GM23248 (cell line): ENCODE measurements at regions of chr6 and their contacts with region 1.

Region 1: DNA sequence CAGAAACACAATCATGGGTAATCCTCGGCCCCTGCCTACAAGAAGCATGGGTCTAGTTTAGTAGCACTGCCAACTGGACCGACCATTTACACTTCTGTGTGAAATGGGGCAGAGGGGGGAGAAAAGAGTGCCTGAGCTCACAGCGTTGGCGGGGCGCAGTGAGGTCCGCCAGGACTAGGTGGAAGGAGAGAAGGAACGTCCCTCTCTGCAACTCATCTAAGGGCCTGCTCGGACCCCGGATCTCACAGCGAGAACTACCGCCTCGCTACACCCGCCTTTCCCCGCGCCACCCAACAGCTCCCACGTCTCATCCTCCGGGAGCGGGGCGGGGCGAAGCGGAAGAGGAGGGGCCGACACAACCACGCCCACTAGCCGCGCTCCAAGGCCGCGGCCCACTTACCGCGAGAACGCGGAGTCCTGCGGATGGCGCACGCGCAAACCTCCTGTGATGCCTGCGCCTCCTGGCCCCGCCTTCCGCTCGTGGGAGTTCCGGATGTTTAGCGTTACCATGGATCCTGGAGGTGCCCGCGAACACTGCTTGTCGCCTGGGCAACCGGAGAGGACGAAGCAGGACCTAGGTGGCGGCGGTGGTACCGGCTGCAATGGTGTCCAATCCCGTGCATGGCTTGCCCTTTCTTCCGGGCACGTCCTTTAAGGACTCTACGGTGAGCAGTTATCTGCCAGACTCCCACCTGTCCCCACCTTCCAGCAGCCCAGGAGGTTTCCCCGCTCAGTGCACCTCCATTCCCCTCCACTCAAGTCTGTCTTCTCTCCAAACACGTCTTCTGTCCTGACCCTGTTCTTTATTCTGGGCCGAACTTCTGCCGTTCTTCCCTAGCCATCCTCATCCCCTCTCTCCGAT is at the start of gene EFHC1:
- DNase-seq: peak; percentile 100
- H3K4me3 ChIP-seq: peak within 1 kb of the TSS; percentile 89
- H3K27ac ChIP-seq: peak within 1 kb of the TSS; percentile 95
- H3K4me1 ChIP-seq: peaks cover 75% of the 10 kb centered on the region
- H3K27me3 ChIP-seq: no peaks in the 10 kb centered on the region
- total RNA-seq, gene EFHC1: 21.6 and 36.1 TPM in 2 replicates

Region 2: GRCh38 chr6:52155791-52156576 is 264.1 kb before region 1 on chr6:
- in situ Hi-C with region 1: no loop called
- DNase-seq: no peak
- H3K4me3 ChIP-seq: no peak overlapping the region
- H3K27ac ChIP-seq: no peak overlapping the region
- H3K4me1 ChIP-seq: 0 out of 2 replicates have a peak, but pooled peaks cover 6% of the 10 kb centered on the region
- H3K27me3 ChIP-seq: no peaks in the 10 kb centered on the region

Region 3: DNA sequence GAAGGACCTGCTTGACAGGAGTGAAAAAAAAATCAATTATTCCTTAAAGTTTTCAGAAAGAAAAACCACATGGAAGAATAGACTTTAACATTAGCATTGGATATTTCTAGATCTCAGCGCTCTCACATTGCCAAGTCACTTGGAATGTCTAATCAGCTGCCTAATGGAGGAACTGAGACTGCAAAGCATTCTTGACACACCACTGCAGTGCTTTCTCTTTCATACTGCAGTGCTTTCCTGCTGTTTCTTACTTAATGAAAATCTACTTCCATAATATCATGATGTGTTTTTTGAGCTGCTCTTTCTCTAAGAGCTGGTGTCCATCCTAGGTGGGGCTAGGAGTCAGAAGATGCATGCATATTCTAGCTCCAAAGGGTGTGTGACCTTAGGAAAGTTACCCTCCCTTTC is 115.1 kb before region 1 on chr6:
- in situ Hi-C with region 1: no loop called
- DNase-seq: peak; percentile 73
- H3K4me3 ChIP-seq: peak overlapping the region; percentile 48
- H3K27ac ChIP-seq: peak overlapping the region; percentile 50
- H3K4me1 ChIP-seq: peaks cover 20% of the 10 kb centered on the region
- H3K27me3 ChIP-seq: no peaks in the 10 kb centered on the region

Region 4: DNA sequence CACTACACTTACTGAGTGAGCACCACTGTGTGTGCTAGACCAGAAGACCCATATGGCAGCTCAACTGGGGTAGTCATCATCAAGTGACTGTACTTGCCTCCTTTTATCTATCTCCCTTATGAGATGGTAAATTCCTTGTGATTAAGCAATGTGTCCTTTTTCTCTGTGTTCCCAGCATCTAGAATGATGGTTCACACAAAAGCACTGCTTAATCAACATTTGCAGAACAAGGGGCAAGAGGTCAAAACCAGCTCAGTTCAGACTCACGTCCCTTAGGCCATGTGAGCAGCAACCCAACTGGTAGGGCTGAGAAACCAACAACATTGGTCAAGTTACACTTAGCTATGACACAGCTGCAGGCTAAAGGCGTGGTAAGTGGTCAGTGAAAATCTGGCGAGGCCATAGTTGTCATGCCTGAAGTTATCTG is 146.8 kb after region 1 on chr6:
- in situ Hi-C with region 1: no loop called
- DNase-seq: peak; percentile 96
- H3K4me3 ChIP-seq: no peak overlapping the region; the same call in 1 of the 2 replicates
- H3K27ac ChIP-seq: peak overlapping the region; percentile 93
- H3K4me1 ChIP-seq: peaks cover 75% of the 10 kb centered on the region
- H3K27me3 ChIP-seq: no peaks in the 10 kb centered on the region

Region 5: DNA sequence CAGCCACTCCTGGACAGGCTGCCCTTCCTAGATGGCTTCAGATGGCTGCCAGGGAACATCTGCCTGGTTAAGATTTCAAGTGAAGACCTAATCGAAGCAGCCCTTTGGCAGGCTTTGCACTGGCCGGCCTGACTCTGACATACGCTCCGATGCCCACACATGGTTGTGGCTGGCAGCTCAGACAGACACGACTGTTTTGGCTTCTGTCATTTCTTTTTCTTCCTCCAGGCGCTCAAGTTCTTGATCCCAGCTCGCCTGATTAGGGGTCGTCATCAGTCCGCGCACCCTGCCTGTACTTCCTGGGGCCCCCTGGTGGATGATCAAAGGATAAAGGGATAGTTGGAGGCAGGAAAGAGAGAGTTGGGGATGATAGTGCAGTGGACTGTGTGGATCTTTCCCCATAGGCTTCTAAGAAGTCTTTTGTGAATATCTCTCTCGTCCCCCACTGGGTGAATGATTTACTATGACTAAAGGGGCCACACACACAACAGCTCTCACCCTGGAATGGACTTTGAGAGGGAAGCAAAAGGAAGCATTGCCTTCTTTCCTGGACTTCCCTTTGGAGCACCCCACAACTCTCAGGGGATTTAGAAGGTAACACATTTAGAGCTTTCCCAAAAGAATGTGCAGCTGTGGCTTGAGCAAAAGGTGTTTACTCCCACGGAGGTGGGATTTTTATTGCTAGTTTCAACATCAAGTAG is 178.2 kb after region 1 on chr6:
- in situ Hi-C with region 1: loop called (anchors 10 kb)
- DNase-seq: peak; percentile 93
- H3K4me3 ChIP-seq: peak overlapping the region; percentile 33
- H3K27ac ChIP-seq: peak overlapping the region; percentile 96
- H3K4me1 ChIP-seq: peaks cover 58% of the 10 kb centered on the region
- H3K27me3 ChIP-seq: no peaks in the 10 kb centered on the region

Region 6: DNA sequence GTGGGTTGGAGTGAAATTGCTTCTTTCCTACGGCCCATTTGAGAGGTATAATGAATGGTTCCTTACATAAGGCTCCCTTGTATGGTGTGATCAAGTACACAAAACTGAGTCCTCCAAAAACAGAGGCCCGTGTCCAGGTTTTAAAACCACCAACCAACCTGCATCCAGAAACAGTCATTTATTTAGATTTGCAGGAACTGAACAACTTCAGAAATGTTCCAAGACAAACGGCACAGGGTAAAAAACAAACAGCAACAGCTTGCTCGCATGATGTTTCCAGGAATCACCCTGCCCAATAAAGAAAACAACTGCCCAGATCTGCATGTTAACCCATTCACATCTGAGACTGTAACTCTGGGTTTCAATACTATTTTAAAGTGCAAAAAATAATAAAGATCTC is 197.0 kb after region 1 on chr6:
- in situ Hi-C with region 1: no loop called
- DNase-seq: no peak
- H3K4me3 ChIP-seq: no peak overlapping the region
- H3K27ac ChIP-seq: no peak overlapping the region
- H3K4me1 ChIP-seq: peaks cover 22% of the 10 kb centered on the region
- H3K27me3 ChIP-seq: no peaks in the 10 kb centered on the region